Aorta (tissue), 5 donors: ENCODE measurements at regions of chr10 and their contacts with region 1.

Region 1: DNA sequence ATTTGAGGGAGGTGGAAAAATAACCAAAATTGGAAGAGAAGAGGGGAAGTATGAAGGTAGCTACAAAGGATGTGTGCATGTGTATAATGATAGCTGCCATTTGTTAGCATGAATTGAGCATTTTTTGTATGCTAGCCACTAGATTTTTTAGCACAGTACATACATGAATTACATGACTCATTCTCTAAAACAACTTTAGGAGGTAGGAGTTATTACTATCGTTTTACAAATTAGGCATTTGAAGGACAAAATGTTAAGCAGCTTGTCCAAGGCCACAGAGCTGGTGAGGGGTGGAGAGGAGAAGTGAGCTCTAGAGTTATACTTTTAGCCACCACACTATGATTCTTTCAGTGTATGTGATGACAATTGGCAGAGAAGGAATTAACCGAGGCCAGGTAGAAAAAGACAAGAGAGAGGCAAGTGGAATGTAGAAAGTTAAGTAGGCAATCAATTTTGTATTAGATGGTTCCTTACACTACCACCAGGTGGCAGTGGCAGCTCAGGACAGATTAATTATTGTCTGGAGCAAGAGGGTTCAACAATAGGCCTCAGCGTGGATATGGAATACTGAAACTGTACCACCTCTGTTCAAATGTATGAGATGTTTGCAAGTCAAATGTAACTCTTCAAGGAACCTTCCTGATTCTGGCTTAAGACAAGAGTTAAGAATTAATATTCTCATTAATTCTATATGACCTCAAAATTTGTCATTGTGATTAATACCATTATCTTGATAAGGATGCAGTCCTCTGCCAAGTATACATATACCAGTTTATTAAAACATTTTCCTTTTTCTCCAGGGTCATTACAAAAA is 128.0 kb downstream of the MBL2 start:
- DNase-seq: no peak
- ATAC-seq: no peak
- H3K4me3 ChIP-seq: no peak overlapping the region
- H3K27ac ChIP-seq: no peak overlapping the region
- H3K4me1 ChIP-seq: no peaks in the 10 kb centered on the region
- H3K27me3 ChIP-seq: no peaks in the 10 kb centered on the region

Region 2: GRCh38 chr10:51397695-51398094 is 1246.9 kb before region 1 on chr10:
- intact Hi-C with region 1: no loop called
- DNase-seq: peak; percentile 59 to 80
- ATAC-seq: peak; percentile 68
- H3K4me3 ChIP-seq: no peak overlapping the region
- H3K27ac ChIP-seq: peak overlapping the region in 1 of 2 donors; percentile 28
- H3K4me1 ChIP-seq: peaks cover 1 to 7% of the 10 kb centered on the region in 2 donors
- H3K27me3 ChIP-seq: no peaks in the 10 kb centered on the region

Region 3: GRCh38 chr10:52729271-52730104 is 84.9 kb after region 1 on chr10:
- intact Hi-C with region 1: loop called in 1 of 2 experiments (anchors 2 kb)
- DNase-seq: no peak
- ATAC-seq: no peak
- H3K4me3 ChIP-seq: no peak overlapping the region
- H3K27ac ChIP-seq: no peak overlapping the region
- H3K4me1 ChIP-seq: no peaks in the 10 kb centered on the region
- H3K27me3 ChIP-seq: no peaks in the 10 kb centered on the region

Region 4: GRCh38 chr10:52779541-52780390 is 135.2 kb after region 1 on chr10:
- intact Hi-C with region 1: loop called in 1 of 2 experiments (anchors 5 kb)
- DNase-seq: peak in 1 of 2 donors; percentile 78
- ATAC-seq: no peak
- H3K4me3 ChIP-seq: no peak overlapping the region
- H3K27ac ChIP-seq: no peak overlapping the region
- H3K4me1 ChIP-seq: no peaks in the 10 kb centered on the region
- H3K27me3 ChIP-seq: no peaks in the 10 kb centered on the region